B cell (primary cell): ENCODE measurements at regions of chr17 and their contacts with region 1.

Region 1: DNA sequence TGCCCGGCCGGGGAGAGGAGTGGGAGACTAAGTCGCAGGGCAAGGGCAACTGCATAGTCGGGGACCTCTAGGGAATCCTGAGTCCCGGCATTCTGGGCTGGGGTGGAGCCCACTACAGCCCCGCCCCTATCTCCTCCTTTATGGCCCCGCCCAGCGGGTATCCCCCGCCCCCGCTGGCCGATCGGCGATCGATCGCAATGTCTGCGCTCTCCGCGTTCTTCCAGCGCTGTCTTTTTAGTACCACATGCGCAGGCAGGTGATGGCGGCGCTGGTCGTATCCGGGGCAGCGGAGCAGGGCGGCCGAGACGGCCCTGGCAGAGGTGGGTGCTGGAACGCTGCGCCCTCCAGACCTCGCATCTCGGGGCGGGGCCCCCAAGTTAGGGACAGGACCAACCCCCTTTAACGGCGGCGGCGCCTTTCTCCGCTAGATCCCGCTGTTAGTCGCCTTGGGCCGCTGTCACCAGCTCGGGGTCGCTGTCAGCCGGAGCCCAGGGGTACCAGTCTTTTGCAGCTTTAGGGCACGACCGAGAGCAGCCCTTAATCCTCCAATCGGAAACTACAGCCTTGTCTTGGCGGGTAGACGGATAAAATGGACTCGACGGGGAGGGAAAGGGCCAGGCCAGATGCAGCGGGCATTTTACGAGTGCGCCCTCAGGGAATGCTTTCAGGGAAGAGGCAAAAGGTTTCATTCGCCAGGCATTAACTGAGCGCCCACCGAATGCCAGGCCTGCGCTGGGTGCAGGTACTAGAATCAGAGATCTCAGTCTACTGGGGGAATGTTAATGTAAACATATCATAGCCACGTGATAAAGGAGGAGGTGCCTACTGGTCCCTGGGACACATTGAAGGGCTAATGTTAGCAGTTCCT is at the start of gene DPH1:
- DNase-seq: peak; percentile 90
- ATAC-seq: peak; percentile 78
- H3K4me3 ChIP-seq: peak within 1 kb of the TSS; percentile 89 to 100 (median 98)
- H3K4me3 Mint-ChIP-seq: peak within 1 kb of the TSS; percentile 98
- H3K27ac ChIP-seq: peak within 1 kb of the TSS; percentile 48 to 79
- H3K27ac Mint-ChIP-seq: peak within 1 kb of the TSS; percentile 88
- H3K4me1 ChIP-seq: peaks cover 22 to 48% of the 10 kb centered on the region in 2 donors
- H3K4me1 Mint-ChIP-seq: peaks cover 40% of the 10 kb centered on the region
- H3K27me3 ChIP-seq: peaks cover 0 to 34% (median 11%) of the 10 kb centered on the region in 4 experiments
- H3K27me3 Mint-ChIP-seq: peaks cover 19% of the 10 kb centered on the region
- CTCF ChIP-seq: no peak
- total RNA-seq, gene DPH1: 76.6 and 83.6 TPM in 2 replicates

Region 2: DNA sequence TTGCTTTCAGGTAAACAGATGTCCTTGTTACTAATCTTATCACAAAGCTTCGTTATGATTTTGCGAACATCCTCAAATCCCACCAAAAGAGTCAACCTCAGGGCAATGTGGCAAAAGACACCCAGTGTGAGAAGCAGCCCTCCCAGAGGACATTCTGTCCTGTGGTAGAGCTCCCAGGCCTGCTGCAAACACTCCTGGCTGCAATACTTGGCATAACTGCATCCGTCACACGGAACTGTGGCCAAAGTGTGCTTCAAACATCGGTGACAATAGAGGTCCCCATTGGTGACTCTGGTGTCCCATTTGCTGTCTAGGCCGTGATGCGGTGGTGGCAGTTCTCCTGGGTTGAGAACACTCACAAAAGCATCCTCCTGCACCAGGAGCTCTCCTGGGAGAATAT is 229.9 kb before region 1 on chr17:
- CTCF ChIA-PET with region 1: no interaction called
- POLR2A ChIA-PET with region 1: no interaction called
- intact Hi-C with region 1: no loop called
- DNase-seq: no peak
- ATAC-seq: no peak
- H3K4me3 ChIP-seq: no peak overlapping the region
- H3K4me3 Mint-ChIP-seq: no peak overlapping the region
- H3K27ac ChIP-seq: no peak overlapping the region
- H3K27ac Mint-ChIP-seq: no peak overlapping the region
- H3K4me1 ChIP-seq: no peaks in the 10 kb centered on the region
- H3K4me1 Mint-ChIP-seq: peaks cover 4% of the 10 kb centered on the region
- H3K27me3 ChIP-seq: no peaks in the 10 kb centered on the region
- H3K27me3 Mint-ChIP-seq: no peaks in the 10 kb centered on the region
- CTCF ChIP-seq: no peak

Region 3: GRCh38 chr17:1908699-1909309 is 121.3 kb before region 1 on chr17:
- CTCF ChIA-PET with region 1: no interaction called
- POLR2A ChIA-PET with region 1: no interaction called
- intact Hi-C with region 1: loop called (anchors 5 kb)
- DNase-seq: peak; percentile 51
- ATAC-seq: peak; percentile 7
- H3K4me3 ChIP-seq: peak overlapping the region in 3 of 5 experiments; percentile 5 to 25 (median 19)
- H3K4me3 Mint-ChIP-seq: peak overlapping the region; percentile 50
- H3K27ac ChIP-seq: no peak overlapping the region
- H3K27ac Mint-ChIP-seq: no peak overlapping the region
- H3K4me1 ChIP-seq: peaks cover 24 to 29% of the 10 kb centered on the region in 2 donors
- H3K4me1 Mint-ChIP-seq: peaks cover 28% of the 10 kb centered on the region
- H3K27me3 ChIP-seq: peaks cover 0 to 67% (median 38%) of the 10 kb centered on the region in 4 experiments
- H3K27me3 Mint-ChIP-seq: peaks cover 54% of the 10 kb centered on the region
- CTCF ChIP-seq: no peak

Region 4: DNA sequence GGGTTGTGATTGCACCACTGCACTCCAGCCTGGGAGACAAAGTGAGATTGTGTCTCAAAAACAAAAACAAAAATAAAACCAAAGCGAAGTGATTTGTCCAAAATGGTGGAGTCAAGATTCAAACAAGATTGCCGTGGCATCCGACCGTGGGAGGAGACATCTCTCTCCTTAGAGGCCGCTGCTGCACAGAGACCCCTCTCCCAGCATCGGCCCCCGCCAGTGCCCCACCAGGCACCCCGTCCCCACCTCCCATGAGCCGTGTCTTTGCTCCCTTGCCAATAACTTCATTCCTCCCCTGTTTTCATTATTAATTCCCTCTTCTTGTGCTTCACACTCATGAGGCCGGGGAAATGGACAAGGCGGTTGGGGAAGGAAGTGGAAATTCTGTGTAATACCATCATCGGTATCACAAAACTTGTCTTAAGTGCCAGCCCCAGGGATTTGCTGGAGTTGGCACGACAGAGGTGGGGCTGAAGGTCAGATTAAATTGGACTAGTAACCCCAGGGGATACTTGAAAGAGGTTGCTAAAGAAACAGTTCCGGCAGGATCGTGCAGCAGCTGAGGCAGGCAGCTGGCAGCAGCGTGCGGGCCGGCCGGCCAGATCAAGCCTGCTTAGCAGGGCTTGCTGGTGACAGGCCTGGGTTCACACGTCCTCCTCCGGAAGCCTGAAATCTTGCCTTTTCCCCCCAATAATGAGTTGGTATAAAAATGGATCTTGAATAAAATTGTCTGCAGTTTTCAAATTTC is 71.8 kb before region 1 on chr17:
- CTCF ChIA-PET with region 1: no interaction called
- POLR2A ChIA-PET with region 1: no interaction called
- intact Hi-C with region 1: no loop called
- DNase-seq: no peak
- ATAC-seq: no peak
- H3K4me3 ChIP-seq: no peak overlapping the region
- H3K4me3 Mint-ChIP-seq: no peak overlapping the region
- H3K27ac ChIP-seq: no peak overlapping the region
- H3K27ac Mint-ChIP-seq: no peak overlapping the region
- H3K4me1 ChIP-seq: no peaks in the 10 kb centered on the region
- H3K4me1 Mint-ChIP-seq: no peaks in the 10 kb centered on the region
- H3K27me3 ChIP-seq: no peaks in the 10 kb centered on the region
- H3K27me3 Mint-ChIP-seq: peaks cover 10% of the 10 kb centered on the region
- CTCF ChIP-seq: no peak

Region 5: DNA sequence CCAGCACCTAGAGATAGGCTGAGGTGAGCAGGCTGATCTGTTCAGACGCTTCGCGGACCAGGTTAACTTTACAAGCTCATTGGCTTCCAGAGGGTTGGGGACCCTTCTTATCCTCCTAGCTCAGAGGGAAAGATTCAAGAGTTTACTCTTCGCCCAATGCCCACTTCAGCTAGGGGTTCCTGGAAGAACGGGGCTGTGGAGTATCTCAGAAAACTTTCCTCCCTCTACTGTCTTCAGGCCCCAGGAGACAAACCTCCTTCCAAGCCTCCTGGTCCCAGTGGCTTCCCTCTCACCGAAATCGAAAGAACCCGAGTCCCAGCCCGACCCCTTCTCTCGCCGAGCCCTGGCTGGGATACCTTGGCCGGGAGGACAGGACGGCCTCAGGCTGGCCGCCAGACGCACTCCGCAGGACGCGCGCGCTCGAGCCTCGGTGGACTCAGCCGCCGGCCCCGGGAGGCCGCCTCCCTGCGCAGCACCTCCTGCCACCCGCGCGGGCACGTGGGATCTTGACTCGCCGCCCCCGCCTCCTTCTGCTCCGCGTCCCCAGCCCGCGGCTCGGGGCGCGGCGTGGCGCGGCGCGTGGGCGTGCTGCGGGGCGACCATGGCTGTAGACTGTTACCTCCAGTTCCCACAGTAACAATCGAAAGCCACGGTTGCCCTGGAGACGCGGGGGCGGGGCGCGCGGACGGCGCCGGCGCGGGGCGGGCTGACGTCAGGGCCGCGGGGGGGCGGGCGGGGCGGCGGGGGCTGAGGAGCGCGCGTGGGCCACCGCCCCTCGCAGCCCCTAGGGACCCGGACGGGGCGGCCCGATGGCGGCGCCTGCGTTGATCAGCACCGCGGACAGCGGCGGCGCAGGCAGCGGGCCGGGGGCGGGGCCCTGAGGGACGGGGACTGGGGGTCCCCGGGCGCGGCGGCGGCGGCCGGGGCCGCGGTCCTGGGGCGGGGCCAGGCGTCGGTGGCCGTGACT is 19.5 kb after region 1 on chr17:
- CTCF ChIA-PET with region 1: interaction called, 4 read pairs
- POLR2A ChIA-PET with region 1: no interaction called
- intact Hi-C with region 1: loop called (anchors 1 kb)
- DNase-seq: peak; percentile 94
- ATAC-seq: peak; percentile 84
- H3K4me3 ChIP-seq: peak overlapping the region; percentile 45 to 74 (median 59)
- H3K4me3 Mint-ChIP-seq: peak overlapping the region; percentile 78
- H3K27ac ChIP-seq: peak overlapping the region in 1 of 2 donors; percentile 47
- H3K27ac Mint-ChIP-seq: peak overlapping the region; percentile 61
- H3K4me1 ChIP-seq: peaks cover 40 to 52% of the 10 kb centered on the region in 2 donors
- H3K4me1 Mint-ChIP-seq: peaks cover 30% of the 10 kb centered on the region
- H3K27me3 ChIP-seq: peaks cover 0 to 60% (median 18%) of the 10 kb centered on the region in 4 experiments
- H3K27me3 Mint-ChIP-seq: peaks cover 11% of the 10 kb centered on the region
- CTCF ChIP-seq: no peak

Region 6: DNA sequence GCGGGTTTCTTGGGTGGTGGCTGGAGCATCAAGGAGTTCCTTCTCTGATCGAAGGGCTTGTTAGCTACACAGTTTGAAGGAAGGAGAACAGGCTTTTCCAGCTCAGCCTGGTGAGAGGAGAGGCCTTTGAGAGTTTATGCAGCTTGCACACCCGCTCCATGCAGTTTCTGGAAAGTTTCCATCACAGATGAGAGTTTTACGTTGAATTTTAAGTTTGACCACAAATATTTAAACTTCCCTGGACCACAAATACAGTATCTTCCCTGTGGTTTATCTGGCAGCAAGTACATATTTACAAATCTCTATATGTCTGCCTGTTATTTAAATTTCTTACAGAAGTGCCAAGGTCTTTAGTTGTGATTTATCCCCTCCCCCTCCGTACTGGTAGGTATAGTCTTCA is 81.6 kb after region 1 on chr17:
- CTCF ChIA-PET with region 1: no interaction called
- POLR2A ChIA-PET with region 1: no interaction called
- intact Hi-C with region 1: no loop called
- DNase-seq: no peak
- ATAC-seq: no peak
- H3K4me3 ChIP-seq: no peak overlapping the region
- H3K4me3 Mint-ChIP-seq: no peak overlapping the region
- H3K27ac ChIP-seq: no peak overlapping the region
- H3K27ac Mint-ChIP-seq: no peak overlapping the region
- H3K4me1 ChIP-seq: no peaks in the 10 kb centered on the region
- H3K4me1 Mint-ChIP-seq: no peaks in the 10 kb centered on the region
- H3K27me3 ChIP-seq: no peaks in the 10 kb centered on the region
- H3K27me3 Mint-ChIP-seq: no peaks in the 10 kb centered on the region
- CTCF ChIP-seq: no peak

Region 7: DNA sequence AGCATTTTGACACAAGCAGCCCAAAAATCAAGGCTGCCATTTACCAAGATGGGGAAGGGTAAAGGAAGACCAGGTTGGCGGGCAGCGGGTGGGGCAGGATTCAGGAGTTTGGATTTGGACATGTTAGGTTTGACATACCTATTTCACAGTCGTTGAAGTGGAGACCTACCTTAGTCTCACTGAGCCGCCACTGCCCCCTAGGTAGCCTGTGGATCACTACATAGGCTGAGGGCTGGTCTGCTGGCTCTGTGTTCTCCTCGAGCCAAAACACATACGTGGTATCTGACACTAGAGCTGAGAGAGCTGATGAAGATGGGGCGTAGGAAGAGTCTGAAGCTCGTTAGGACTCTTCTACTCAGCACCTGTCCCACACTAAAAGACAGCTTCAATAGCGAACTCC is 139.9 kb after region 1 on chr17:
- CTCF ChIA-PET with region 1: no interaction called
- POLR2A ChIA-PET with region 1: no interaction called
- intact Hi-C with region 1: no loop called
- DNase-seq: peak; percentile 48
- ATAC-seq: no peak
- H3K4me3 ChIP-seq: no peak overlapping the region
- H3K4me3 Mint-ChIP-seq: no peak overlapping the region
- H3K27ac ChIP-seq: no peak overlapping the region
- H3K27ac Mint-ChIP-seq: no peak overlapping the region
- H3K4me1 ChIP-seq: no peaks in the 10 kb centered on the region
- H3K4me1 Mint-ChIP-seq: no peaks in the 10 kb centered on the region
- H3K27me3 ChIP-seq: no peaks in the 10 kb centered on the region
- H3K27me3 Mint-ChIP-seq: no peaks in the 10 kb centered on the region
- CTCF ChIP-seq: peak; percentile 29